K562 (cell line): ENCODE measurements at regions of chr12 and their contacts with region 1.

Region 1: GRCh38 chr12:14185427-14186192 is 179.9 kb upstream of the ATF7IP start:
- DNase-seq: peak; percentile 9 to 58 (median 18)
- ATAC-seq: peak; percentile 88
- H3K4me3 ChIP-seq: no peak overlapping the region
- H3K27ac ChIP-seq: no peak overlapping the region
- H3K4me1 ChIP-seq: no peaks in the 10 kb centered on the region
- H3K27me3 ChIP-seq: no peaks in the 10 kb centered on the region
- CTCF ChIP-seq: peak; percentile 57 to 67 (median 61); a peak in 5 of 6 replicates
- EP300 ChIP-seq: no peak
- POLR2A ChIP-seq: no peak
- RAD21 ChIP-seq: peak; percentile 55 to 70

Region 2: GRCh38 chr12:14365294-14366208 is 179.9 kb after region 1 on chr12 and contains the start of gene ATF7IP:
- CTCF ChIA-PET with region 1: interaction called, 3 read pairs
- POLR2A ChIA-PET with region 1: no interaction called
- in situ Hi-C with region 1: no loop called
- intact Hi-C with region 1: loop called (anchors 1 kb)
- DNase-seq: peak; percentile 75 to 90 (median 82)
- ATAC-seq: peak; percentile 93
- H3K4me3 ChIP-seq: peak within 1 kb of the TSS; percentile 41
- H3K27ac ChIP-seq: peak within 1 kb of the TSS; percentile 93
- H3K4me1 ChIP-seq: no peaks in the 10 kb centered on the region; a peak in 1 of 5 replicates
- H3K27me3 ChIP-seq: no peaks in the 10 kb centered on the region
- CTCF ChIP-seq: peak in 1 of 3 experiments; percentile 40; a peak in 2 of 6 replicates
- EP300 ChIP-seq: no peak
- POLR2A ChIP-seq: peak; percentile 60
- RAD21 ChIP-seq: peak; percentile 28 to 47; a peak in 3 of 4 replicates
- polyA plus RNA-seq, gene ATF7IP: 2.8 to 3.5 TPM

Region 3: DNA sequence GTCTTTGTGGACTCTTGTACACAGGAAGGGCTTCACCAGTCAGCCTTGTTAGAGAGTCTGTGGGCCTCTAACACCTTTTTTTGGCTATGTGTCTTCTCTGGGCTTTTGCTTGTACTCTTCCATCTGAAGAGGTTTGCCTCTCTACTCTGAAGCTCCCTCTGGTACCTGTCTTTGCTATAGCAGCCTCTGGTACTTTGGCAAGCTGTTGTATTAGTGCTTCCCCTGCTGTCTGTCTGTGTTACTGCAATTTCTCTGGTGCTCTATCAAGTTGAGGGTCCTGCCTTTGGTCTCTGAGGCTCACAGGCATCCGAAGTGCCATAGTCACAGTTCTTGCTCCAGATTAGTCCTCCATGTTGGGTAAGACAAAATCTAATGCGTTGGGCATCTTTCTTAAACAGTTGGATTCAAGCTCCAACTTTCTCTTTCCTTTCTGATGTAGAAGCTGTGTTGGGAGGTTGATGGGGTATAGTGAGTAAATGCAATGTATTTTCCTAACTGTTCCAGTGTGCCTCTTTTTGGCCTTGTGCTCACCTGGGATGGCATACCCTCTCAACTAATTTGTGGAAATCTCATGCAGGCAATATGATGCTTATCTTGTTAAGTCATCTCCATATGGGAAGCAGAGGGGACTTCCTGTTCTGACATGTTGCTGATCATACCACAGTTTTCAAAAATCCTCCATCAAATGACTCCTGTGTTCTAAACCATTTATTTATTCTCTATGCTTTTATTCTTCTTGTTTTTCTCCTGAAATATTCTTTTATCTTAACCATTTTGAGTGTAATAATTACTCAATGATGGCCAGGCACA is 268.7 kb after region 1 on chr12:
- CTCF ChIA-PET with region 1: interaction called, 3 read pairs
- POLR2A ChIA-PET with region 1: no interaction called
- in situ Hi-C with region 1: no loop called
- intact Hi-C with region 1: loop called (anchors 5 kb)
- DNase-seq: peak; percentile 12 to 50 (median 28)
- ATAC-seq: peak; percentile 91
- H3K4me3 ChIP-seq: no peak overlapping the region
- H3K27ac ChIP-seq: no peak overlapping the region
- H3K4me1 ChIP-seq: no peaks in the 10 kb centered on the region
- H3K27me3 ChIP-seq: no peaks in the 10 kb centered on the region
- CTCF ChIP-seq: peak; percentile 63 to 98 (median 90)
- EP300 ChIP-seq: no peak
- POLR2A ChIP-seq: no peak
- RAD21 ChIP-seq: peak; percentile 31 to 86